MCF 10A (cell line): ENCODE measurements at regions of chrX and their contacts with region 1.

Region 1: GRCh38 chrX:102835504-102836146 is 101.4 kb upstream of the RAB40AL start:
- DNase-seq: peak; percentile 32
- H3K4me3 Mint-ChIP-seq: no peak overlapping the region
- H3K27ac Mint-ChIP-seq: no peak overlapping the region
- H3K4me1 Mint-ChIP-seq: no peaks in the 10 kb centered on the region
- H3K27me3 Mint-ChIP-seq: peaks cover 43% of the 10 kb centered on the region
- CTCF ChIP-seq: peak; percentile 50

Region 2: GRCh38 chrX:102863735-102864134 is 28.1 kb after region 1 on chrX:
- CTCF ChIA-PET with region 1: interaction called, 11 read pairs
- POLR2A ChIA-PET with region 1: no interaction called
- intact Hi-C with region 1: no loop called
- DNase-seq: peak; percentile 86
- H3K4me3 Mint-ChIP-seq: no peak overlapping the region
- H3K27ac Mint-ChIP-seq: no peak overlapping the region
- H3K4me1 Mint-ChIP-seq: no peaks in the 10 kb centered on the region
- H3K27me3 Mint-ChIP-seq: peaks cover 25% of the 10 kb centered on the region
- CTCF ChIP-seq: peak; percentile 90